OCI-LY7 (cell line): ENCODE measurements at regions of chr2 and their contacts with region 1.

Region 1: GRCh38 chr2:221283896-221284545 is 288.1 kb downstream of the EPHA4 start:
- DNase-seq: no peak
- H3K4me3 ChIP-seq: no peak overlapping the region
- H3K27ac ChIP-seq: no peak overlapping the region
- H3K4me1 ChIP-seq: peaks cover 14% of the 10 kb centered on the region
- CTCF ChIP-seq: no peak

Region 2: GRCh38 chr2:220904015-220904414 is 380.0 kb before region 1 on chr2:
- CTCF ChIA-PET with region 1: no interaction called
- POLR2A ChIA-PET with region 1: no interaction called
- intact Hi-C with region 1: no loop called
- DNase-seq: no peak
- H3K4me3 ChIP-seq: no peak overlapping the region
- H3K27ac ChIP-seq: no peak overlapping the region
- H3K4me1 ChIP-seq: no peaks in the 10 kb centered on the region
- CTCF ChIP-seq: no peak

Region 3: DNA sequence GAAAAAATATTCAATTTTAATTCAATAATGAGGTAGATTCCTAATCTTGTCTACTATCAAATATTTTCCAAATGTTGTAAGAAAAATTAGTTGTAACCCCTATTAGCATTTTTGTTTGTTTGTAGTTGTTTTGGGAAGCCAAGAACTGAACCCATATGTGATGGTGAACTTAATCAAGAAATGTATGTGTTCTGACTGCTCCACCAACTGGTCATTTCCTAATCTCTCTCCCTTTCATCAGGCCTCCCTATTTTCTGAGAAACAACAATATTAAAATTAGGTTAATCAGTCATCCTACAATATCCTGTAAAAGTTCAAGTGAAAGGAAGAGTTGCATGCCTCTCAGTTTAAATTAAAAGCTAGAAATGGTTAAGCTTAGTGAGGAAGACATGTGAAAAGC is 215.9 kb before region 1 on chr2:
- CTCF ChIA-PET with region 1: no interaction called
- POLR2A ChIA-PET with region 1: no interaction called
- intact Hi-C with region 1: no loop called
- DNase-seq: no peak
- H3K4me3 ChIP-seq: no peak overlapping the region
- H3K27ac ChIP-seq: no peak overlapping the region
- H3K4me1 ChIP-seq: no peaks in the 10 kb centered on the region
- CTCF ChIP-seq: no peak

Region 4: GRCh38 chr2:221095356-221095755 is 188.7 kb before region 1 on chr2:
- CTCF ChIA-PET with region 1: no interaction called
- POLR2A ChIA-PET with region 1: no interaction called
- intact Hi-C with region 1: no loop called
- DNase-seq: no peak
- H3K4me3 ChIP-seq: no peak overlapping the region
- H3K27ac ChIP-seq: no peak overlapping the region
- H3K4me1 ChIP-seq: no peaks in the 10 kb centered on the region
- CTCF ChIP-seq: no peak

Region 5: GRCh38 chr2:221517696-221518151 is 233.7 kb after region 1 on chr2:
- CTCF ChIA-PET with region 1: no interaction called
- POLR2A ChIA-PET with region 1: no interaction called
- intact Hi-C with region 1: loop called (anchors 10 kb)
- DNase-seq: peak; percentile 66
- H3K4me3 ChIP-seq: no peak overlapping the region
- H3K27ac ChIP-seq: no peak overlapping the region
- H3K4me1 ChIP-seq: peaks cover 13% of the 10 kb centered on the region
- CTCF ChIP-seq: no peak